AG04449 (cell line): ENCODE measurements at regions of chr21 and their contacts with region 1.

Region 1: GRCh38 chr21:29164325-29164942 is 34.0 kb downstream of the MAP3K7CL start:
- DNase-seq: no peak
- H3K4me3 ChIP-seq: no peak overlapping the region
- CTCF ChIP-seq: peak; percentile 70

Region 2: DNA sequence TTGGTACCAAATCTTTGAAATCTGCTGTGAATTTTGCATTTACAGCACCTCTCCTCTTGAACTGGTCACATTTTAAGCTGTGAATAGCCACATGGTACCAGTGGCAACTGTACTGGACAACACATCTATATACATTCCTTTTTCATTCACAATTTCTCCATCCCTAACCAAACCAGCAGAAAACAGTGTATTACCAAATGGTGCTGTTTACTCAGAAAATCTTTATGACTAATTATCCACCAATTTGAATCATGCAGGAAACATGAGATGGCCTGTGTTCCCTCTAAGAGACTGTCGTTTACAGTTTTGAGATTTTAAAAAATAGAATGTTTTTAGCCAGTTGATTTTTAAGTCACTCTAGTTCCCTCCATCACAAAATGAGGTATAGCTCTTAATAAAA is 73.4 kb before region 1 on chr21:
- CTCF ChIA-PET with region 1: interaction called, 37 read pairs
- POLR2A ChIA-PET with region 1: no interaction called
- DNase-seq: no peak
- H3K4me3 ChIP-seq: no peak overlapping the region
- CTCF ChIP-seq: no peak

Region 3: GRCh38 chr21:29174607-29175013 is 10.2 kb after region 1 on chr21:
- CTCF ChIA-PET with region 1: interaction called, 19 read pairs
- POLR2A ChIA-PET with region 1: no interaction called
- DNase-seq: no peak
- H3K4me3 ChIP-seq: no peak overlapping the region
- CTCF ChIP-seq: no peak

Region 4: GRCh38 chr21:29298348-29299045 is 134.1 kb after region 1 on chr21 and contains the start of gene BACH1:
- CTCF ChIA-PET with region 1: interaction called, 42 read pairs
- POLR2A ChIA-PET with region 1: interaction called, 9 read pairs
- DNase-seq: peak; percentile 52
- H3K4me3 ChIP-seq: peak within 1 kb of the TSS; percentile 96
- CTCF ChIP-seq: peak; percentile 62

Region 5: DNA sequence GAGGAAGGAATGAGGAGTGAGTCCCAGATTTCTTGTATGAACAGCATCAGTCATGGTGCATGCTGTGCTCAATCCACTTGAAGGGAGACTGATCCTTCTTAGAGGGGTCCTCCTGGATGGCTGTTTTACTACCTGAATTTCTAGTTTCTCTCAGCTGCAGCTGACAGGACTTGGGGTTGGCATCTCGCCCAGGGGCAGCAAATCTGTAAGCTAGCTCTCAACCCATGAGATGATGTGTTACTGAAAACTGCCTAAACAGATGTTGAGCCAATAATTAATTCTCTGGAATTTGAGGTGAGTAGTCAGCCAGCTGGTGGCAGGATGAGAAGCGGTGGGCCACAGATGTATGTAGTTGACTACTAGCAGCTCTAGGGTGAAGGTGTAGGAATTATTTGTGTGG is 153.9 kb after region 1 on chr21:
- CTCF ChIA-PET with region 1: interaction called, 11 read pairs
- POLR2A ChIA-PET with region 1: no interaction called
- DNase-seq: no peak
- H3K4me3 ChIP-seq: no peak overlapping the region
- CTCF ChIP-seq: no peak

Region 6: GRCh38 chr21:29342363-29342957 is 178.0 kb after region 1 on chr21:
- CTCF ChIA-PET with region 1: interaction called, 20 read pairs
- POLR2A ChIA-PET with region 1: no interaction called
- DNase-seq: peak; percentile 95
- H3K4me3 ChIP-seq: no peak overlapping the region; the same call in 1 of the 2 replicates
- CTCF ChIP-seq: peak; percentile 13

Region 7: GRCh38 chr21:29372063-29372802 is 207.8 kb after region 1 on chr21:
- CTCF ChIA-PET with region 1: interaction called, 50 read pairs
- POLR2A ChIA-PET with region 1: interaction called, 3 read pairs
- DNase-seq: no peak
- H3K4me3 ChIP-seq: no peak overlapping the region
- CTCF ChIP-seq: peak; percentile 62